T-cell (primary cell): ENCODE measurements at regions of chr21 and their contacts with region 1.

Region 1: DNA sequence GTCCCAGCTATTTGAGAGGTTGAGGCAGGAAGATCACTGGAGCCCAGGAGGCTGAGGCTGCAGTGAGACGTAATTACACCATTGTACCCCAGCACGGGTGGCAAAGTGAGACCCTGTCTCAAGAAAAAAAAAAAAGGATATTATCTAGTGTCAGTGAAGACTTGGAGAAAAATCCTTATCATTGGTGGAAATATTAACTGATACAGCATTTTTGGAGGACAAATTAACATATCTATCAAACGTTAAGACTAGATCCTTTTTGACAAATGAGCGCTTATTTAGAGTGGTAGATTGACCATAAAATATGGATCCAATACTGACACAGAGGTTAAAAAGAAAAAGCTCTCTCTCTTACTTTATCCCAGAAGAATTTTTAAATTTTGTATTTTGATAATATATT is 35.2 kb upstream of the DYRK1A start:
- DNase-seq: no peak
- ATAC-seq: no peak
- H3K4me3 ChIP-seq: no peak overlapping the region
- H3K4me3 Mint-ChIP-seq: no peak overlapping the region
- H3K27ac ChIP-seq: no peak overlapping the region
- H3K27ac Mint-ChIP-seq: no peak overlapping the region
- H3K4me1 ChIP-seq: no peaks in the 10 kb centered on the region
- H3K4me1 Mint-ChIP-seq: no peaks in the 10 kb centered on the region
- H3K27me3 ChIP-seq: no peaks in the 10 kb centered on the region
- H3K27me3 Mint-ChIP-seq: no peaks in the 10 kb centered on the region

Region 2: DNA sequence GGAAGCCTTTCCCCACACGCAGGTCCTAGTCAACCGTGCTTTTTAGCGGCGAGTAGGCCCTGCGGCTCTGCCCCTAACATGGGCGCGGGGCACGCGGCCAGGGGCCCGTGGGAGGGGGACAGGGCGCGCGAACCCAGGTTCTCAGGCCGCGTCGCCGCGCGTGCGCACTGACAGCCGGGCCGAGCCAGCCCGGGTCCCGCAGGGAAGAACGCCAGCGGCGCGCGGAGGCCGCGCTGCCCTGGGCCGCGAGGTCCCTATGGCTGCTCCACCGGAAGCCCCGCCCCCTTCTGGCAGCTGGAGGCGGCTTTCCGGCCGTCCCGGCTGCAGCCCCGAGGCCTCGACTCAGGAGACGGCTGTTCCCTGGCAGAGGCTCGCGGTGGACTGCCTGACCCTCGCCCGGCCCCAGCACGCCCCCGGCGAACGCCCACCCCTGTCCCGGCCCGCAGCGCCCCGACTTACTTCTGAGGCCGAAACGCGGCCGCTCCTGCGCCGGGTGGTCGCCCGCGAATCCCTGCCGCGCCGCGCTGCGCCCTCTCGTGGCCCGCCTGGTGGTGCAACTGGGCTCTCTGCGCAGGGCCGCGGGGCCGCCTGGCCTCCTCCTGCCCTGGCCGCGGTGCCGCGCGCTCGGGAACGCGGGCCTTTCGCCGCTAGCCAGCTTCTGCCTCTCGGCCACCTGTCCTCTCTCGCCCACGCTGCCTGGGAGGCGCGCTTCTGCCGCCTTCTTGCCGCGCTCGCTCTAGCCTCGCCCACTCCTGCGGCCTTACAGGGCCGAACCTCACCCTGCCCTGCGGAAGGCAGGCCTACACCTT is 341.5 kb before region 1 on chr21:
- CTCF ChIA-PET with region 1: no interaction called
- POLR2A ChIA-PET with region 1: no interaction called
- DNase-seq: peak; percentile 37 to 91 (median 70)
- ATAC-seq: peak; percentile 76 to 90 (median 89)
- H3K4me3 ChIP-seq: peak overlapping the region; percentile 44 to 58
- H3K4me3 Mint-ChIP-seq: peak overlapping the region; percentile 75 to 91 (median 88)
- H3K27ac ChIP-seq: peak overlapping the region; percentile 67
- H3K27ac Mint-ChIP-seq: peak overlapping the region; percentile 59 to 85
- H3K4me1 ChIP-seq: peaks cover 0 to 19% of the 10 kb centered on the region in 2 experiments
- H3K4me1 Mint-ChIP-seq: peaks cover 24 to 38% (median 27%) of the 10 kb centered on the region in 3 donors
- H3K27me3 ChIP-seq: no peaks in the 10 kb centered on the region
- H3K27me3 Mint-ChIP-seq: no peaks in the 10 kb centered on the region

Region 3: GRCh38 chr21:37383086-37383485 is 51.7 kb after region 1 on chr21:
- CTCF ChIA-PET with region 1: no interaction called
- POLR2A ChIA-PET with region 1: interaction called in 1 of 2 experiments, 10 read pairs
- DNase-seq: no peak
- ATAC-seq: no peak
- H3K4me3 ChIP-seq: no peak overlapping the region
- H3K4me3 Mint-ChIP-seq: peak overlapping the region in 1 of 3 donors; percentile 37
- H3K27ac ChIP-seq: no peak overlapping the region
- H3K27ac Mint-ChIP-seq: no peak overlapping the region
- H3K4me1 ChIP-seq: peaks cover 46 to 48% of the 10 kb centered on the region in 2 experiments
- H3K4me1 Mint-ChIP-seq: peaks cover 88 to 93% (median 93%) of the 10 kb centered on the region in 3 donors
- H3K27me3 ChIP-seq: no peaks in the 10 kb centered on the region
- H3K27me3 Mint-ChIP-seq: no peaks in the 10 kb centered on the region